Mammary epithelial cell (primary cell): ENCODE measurements at regions of chr10 and their contacts with region 1.

Region 1: GRCh38 chr10:90871766-90872647 is at the start of gene RPP30:
- DNase-seq: peak; percentile 86
- H3K4me3 ChIP-seq: peak within 1 kb of the TSS; percentile 80 to 94 (median 89)
- H3K27ac ChIP-seq: peak within 1 kb of the TSS; percentile 72
- H3K4me1 ChIP-seq: peaks cover 20% of the 10 kb centered on the region
- H3K27me3 ChIP-seq: no peaks in the 10 kb centered on the region
- CTCF ChIP-seq: no peak
- total RNA-seq, gene RPP30: 32.3 to 38.8 TPM

Region 2: GRCh38 chr10:89981891-89982290 is 890.1 kb before region 1 on chr10:
- CTCF ChIA-PET with region 1: no interaction called
- dilution Hi-C with region 1: no loop called
- in situ Hi-C with region 1: loop called in 1 of 2 experiments (anchors 25 kb)
- intact Hi-C with region 1: no loop called
- DNase-seq: peak; percentile 27
- H3K4me3 ChIP-seq: no peak overlapping the region
- H3K27ac ChIP-seq: no peak overlapping the region
- H3K4me1 ChIP-seq: peaks cover 7% of the 10 kb centered on the region
- H3K27me3 ChIP-seq: no peaks in the 10 kb centered on the region
- CTCF ChIP-seq: no peak

Region 3: DNA sequence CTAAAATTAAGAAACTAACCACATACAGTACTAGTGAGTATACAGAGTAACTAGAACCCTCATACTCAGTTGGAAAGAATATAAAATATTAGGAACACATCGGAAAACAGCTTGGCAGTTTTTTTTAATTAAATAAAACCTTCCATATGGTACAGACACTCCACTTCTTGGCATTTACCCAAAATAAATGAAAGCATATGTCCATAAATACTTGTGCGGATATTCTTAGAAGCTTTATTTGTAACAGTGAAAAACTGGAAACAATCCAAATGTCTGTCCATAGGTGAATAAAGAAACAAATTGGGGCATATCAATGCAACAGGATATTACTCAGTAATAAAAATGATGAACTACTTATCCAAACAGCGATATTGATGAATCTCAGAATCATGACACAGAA is 424.2 kb before region 1 on chr10:
- CTCF ChIA-PET with region 1: no interaction called
- dilution Hi-C with region 1: no loop called
- in situ Hi-C with region 1: loop called in 1 of 2 experiments (anchors 25 kb)
- intact Hi-C with region 1: no loop called
- DNase-seq: no peak
- H3K4me3 ChIP-seq: no peak overlapping the region
- H3K27ac ChIP-seq: no peak overlapping the region
- H3K4me1 ChIP-seq: peaks cover 18% of the 10 kb centered on the region
- H3K27me3 ChIP-seq: no peaks in the 10 kb centered on the region
- CTCF ChIP-seq: no peak

Region 4: GRCh38 chr10:90822508-90822907 is 49.5 kb before region 1 on chr10:
- CTCF ChIA-PET with region 1: no interaction called
- dilution Hi-C with region 1: no loop called
- in situ Hi-C with region 1: no loop called
- intact Hi-C with region 1: no loop called
- DNase-seq: no peak
- H3K4me3 ChIP-seq: no peak overlapping the region
- H3K27ac ChIP-seq: no peak overlapping the region
- H3K4me1 ChIP-seq: peaks cover 30% of the 10 kb centered on the region
- H3K27me3 ChIP-seq: no peaks in the 10 kb centered on the region
- CTCF ChIP-seq: no peak

Region 5: DNA sequence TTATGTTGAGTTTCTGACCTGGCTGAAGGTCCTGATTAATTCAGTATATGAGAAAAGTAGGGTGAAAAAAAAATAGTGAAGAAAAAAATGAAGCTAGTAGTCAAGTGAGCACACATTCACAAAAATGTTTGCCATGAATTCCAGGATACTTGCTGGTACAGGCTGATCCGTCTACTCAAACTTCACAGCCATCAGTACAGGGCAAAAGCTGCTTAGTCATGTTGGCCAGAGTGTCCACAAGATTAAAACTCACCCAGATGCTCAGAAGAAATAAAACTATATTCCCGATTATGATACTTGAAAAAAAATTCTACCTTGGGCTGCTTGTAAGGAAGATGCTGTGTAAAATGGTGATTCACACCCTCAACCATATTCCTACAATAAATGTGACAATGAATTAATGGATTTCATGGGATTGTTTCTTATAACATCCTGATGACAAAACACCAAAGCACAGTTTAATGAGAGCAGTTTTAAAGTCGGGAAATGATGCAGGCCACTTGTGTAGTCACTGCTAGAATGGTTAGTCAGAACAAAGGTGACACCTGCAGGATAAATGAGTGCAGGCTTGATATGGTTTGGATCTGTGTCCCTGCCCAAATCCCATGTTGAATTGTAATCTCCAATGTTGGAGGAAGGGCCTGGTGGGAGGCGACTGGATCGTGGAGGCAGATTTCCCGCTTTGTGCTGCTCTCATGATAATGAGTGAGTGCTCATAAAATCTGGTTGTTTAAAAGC is 98.1 kb after region 1 on chr10:
- CTCF ChIA-PET with region 1: interaction called, 10 read pairs
- dilution Hi-C with region 1: no loop called
- in situ Hi-C with region 1: no loop called
- intact Hi-C with region 1: no loop called
- DNase-seq: peak; percentile 48
- H3K4me3 ChIP-seq: no peak overlapping the region
- H3K27ac ChIP-seq: no peak overlapping the region
- H3K4me1 ChIP-seq: peaks cover 19% of the 10 kb centered on the region
- H3K27me3 ChIP-seq: no peaks in the 10 kb centered on the region
- CTCF ChIP-seq: peak; percentile 23 to 41